WTC11 (cell line): ENCODE measurements at regions of chr17 and their contacts with region 1.

Region 1: GRCh38 chr17:42527273-42527703 is 8.8 kb upstream of the NAGLU start:
- DNase-seq: peak; percentile 86
- ATAC-seq: peak; percentile 95
- H3K4me3 Mint-ChIP-seq: no peak overlapping the region
- H3K27ac Mint-ChIP-seq: no peak overlapping the region
- H3K4me1 Mint-ChIP-seq: peaks cover 4% of the 10 kb centered on the region
- H3K27me3 Mint-ChIP-seq: peaks cover 21% of the 10 kb centered on the region
- CTCF ChIP-seq: peak; percentile 79

Region 2: GRCh38 chr17:42422958-42423712 is 104.2 kb before region 1 on chr17 and contains the start of gene CAVIN1:
- CTCF ChIA-PET with region 1: interaction called, 18 read pairs
- POLR2A ChIA-PET with region 1: interaction called, 3 read pairs
- DNase-seq: peak; percentile 97
- ATAC-seq: peak; percentile 86
- H3K4me3 Mint-ChIP-seq: peak within 1 kb of the TSS; percentile 95
- H3K27ac Mint-ChIP-seq: peak within 1 kb of the TSS; percentile 93
- H3K4me1 Mint-ChIP-seq: peaks cover 31% of the 10 kb centered on the region
- H3K27me3 Mint-ChIP-seq: peaks cover 57% of the 10 kb centered on the region
- CTCF ChIP-seq: no peak
- total RNA-seq, gene CAVIN1: 24.6 to 28.4 TPM (median 27.8 TPM) in 3 replicates

Region 3: GRCh38 chr17:42438600-42439567 is 88.4 kb before region 1 on chr17:
- CTCF ChIA-PET with region 1: interaction called, 17 read pairs
- POLR2A ChIA-PET with region 1: no interaction called
- DNase-seq: peak; percentile 50
- ATAC-seq: peak; percentile 64
- H3K4me3 Mint-ChIP-seq: no peak overlapping the region
- H3K27ac Mint-ChIP-seq: no peak overlapping the region
- H3K4me1 Mint-ChIP-seq: peaks cover 8% of the 10 kb centered on the region
- H3K27me3 Mint-ChIP-seq: no peaks in the 10 kb centered on the region
- CTCF ChIP-seq: no peak

Region 4: DNA sequence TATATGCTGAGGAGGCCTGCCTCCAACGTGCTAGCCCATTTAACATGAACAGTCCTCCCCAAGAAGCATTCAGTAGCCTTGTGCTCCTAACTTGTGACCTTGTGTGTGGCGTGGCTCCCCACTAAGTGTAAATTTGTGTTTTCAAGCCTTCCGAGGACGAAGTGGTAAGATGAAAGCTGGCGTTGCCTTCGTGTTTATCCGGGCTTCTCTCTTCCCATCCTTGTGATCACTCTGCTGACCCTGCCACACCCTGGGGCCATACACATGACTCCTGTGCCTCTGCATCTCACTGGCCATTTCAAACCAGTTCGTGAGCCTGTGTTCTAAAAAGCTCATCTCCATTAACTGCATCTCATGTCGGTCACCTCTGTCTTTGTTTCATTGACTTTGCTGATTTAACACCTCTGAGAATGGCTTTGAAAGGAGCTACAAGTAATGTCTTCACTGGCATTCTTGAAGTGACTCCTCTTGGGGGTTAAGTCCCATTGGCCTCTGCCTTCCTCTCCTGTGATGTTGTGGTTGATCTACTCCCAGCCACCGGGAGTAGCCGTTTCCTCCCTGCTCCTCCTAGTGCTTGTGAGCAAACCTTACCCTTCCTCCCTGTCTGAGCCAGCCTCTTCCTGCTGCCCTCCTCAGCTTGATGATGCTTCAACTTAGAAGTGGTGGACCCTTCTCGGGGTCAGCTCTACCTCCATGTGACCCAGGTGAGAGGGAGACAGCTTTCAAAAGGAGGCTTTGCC is 18.7 kb before region 1 on chr17:
- CTCF ChIA-PET with region 1: interaction called, 34 read pairs
- POLR2A ChIA-PET with region 1: no interaction called
- DNase-seq: no peak
- ATAC-seq: no peak
- H3K4me3 Mint-ChIP-seq: no peak overlapping the region
- H3K27ac Mint-ChIP-seq: no peak overlapping the region; the same call in 1 of the 2 replicates
- H3K4me1 Mint-ChIP-seq: no peaks in the 10 kb centered on the region
- H3K27me3 Mint-ChIP-seq: no peaks in the 10 kb centered on the region; the same call in 1 of the 2 replicates
- CTCF ChIP-seq: no peak

Region 5: DNA sequence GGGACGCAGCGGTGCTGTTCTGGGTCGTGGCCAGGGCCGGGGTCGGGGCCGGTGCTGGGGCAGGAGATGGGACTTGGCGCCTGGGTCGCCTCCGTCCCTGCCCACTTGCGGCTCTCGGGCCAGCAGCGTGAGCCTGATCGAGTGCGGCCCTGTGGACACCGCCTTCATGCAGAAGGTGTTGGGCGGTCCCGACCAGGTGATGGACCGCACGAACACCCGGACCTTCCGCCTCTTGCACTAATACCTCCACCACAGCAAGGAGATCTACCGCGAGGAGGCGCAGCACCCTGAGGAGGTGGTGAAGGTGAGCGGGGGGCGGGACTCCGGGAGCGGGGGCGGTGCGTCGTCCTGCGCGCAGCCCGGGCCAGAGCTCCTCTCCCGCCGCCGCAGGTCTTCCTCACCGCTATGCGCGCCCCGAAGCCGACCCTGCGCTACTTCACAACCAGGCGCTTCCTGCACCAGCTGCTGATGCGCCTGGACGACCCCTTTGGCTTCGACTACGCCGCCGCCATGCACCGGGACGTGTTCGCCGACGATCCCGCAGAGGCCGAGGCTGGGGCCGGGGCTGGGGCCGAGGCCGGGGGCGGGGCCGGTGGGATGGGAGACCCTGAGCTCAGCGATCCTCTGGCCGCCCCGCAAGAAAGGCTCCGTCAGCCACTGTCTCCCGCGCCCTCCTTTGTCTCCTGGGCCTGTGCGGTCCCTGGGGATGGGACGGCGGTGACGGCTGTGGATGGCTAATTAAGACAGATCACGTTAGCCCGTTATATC is 21.0 kb after region 1 on chr17:
- CTCF ChIA-PET with region 1: interaction called, 65 read pairs
- POLR2A ChIA-PET with region 1: no interaction called
- DNase-seq: peak; percentile 97
- ATAC-seq: peak; percentile 87
- H3K4me3 Mint-ChIP-seq: peak overlapping the region; percentile 59
- H3K27ac Mint-ChIP-seq: no peak overlapping the region
- H3K4me1 Mint-ChIP-seq: peaks cover 15% of the 10 kb centered on the region
- H3K27me3 Mint-ChIP-seq: peaks cover 2% of the 10 kb centered on the region; the same call in 1 of the 2 replicates
- CTCF ChIP-seq: no peak; the same call in 1 of the 2 replicates